BJ (cell line): ENCODE measurements at regions of chr20 and their contacts with region 1.

Region 1: DNA sequence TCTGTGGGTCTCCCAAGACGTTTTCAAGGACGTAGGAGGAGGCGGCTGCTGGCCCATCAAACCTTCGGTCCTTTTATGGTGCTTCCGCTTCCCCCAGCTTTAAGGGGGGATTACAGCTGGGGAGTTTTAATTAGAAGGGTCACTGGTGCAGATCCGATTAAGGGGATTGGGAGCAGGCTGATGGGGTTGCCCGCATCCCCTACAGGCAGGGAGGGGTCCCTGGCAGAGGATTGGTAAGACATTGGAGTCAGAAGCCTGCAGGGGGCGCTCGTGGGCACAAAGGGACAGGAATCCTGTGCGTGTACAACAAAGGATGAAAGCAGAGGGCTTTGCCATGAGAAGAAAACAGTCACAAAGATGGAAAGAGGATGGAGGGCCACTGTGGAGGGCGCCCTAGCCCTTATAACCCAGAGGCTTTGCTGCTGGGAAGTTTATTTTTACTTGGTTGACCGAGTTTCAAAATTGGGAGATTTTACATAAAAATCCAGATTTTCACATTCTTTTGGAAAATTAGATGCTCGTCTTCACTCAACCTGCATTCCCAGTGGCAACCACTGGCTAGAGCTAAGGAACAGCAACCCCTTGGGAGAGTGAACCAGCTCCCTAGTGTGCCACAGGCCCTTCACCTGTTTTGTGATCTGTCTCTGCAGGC is 97.9 kb downstream of the KCNB1 start:
- DNase-seq: no peak
- H3K4me3 ChIP-seq: no peak overlapping the region
- H3K27me3 ChIP-seq: peaks cover 3% of the 10 kb centered on the region; the same call in 1 of the 2 replicates
- CTCF ChIP-seq: peak; percentile 69

Region 2: GRCh38 chr20:49344975-49345374 is 39.6 kb before region 1 on chr20:
- CTCF ChIA-PET with region 1: interaction called, 10 read pairs
- POLR2A ChIA-PET with region 1: no interaction called
- DNase-seq: peak; percentile 92
- H3K4me3 ChIP-seq: peak overlapping the region; percentile 1; the same call in 1 of the 2 replicates
- H3K27me3 ChIP-seq: no peaks in the 10 kb centered on the region; the same call in 1 of the 2 replicates
- CTCF ChIP-seq: no peak

Region 3: DNA sequence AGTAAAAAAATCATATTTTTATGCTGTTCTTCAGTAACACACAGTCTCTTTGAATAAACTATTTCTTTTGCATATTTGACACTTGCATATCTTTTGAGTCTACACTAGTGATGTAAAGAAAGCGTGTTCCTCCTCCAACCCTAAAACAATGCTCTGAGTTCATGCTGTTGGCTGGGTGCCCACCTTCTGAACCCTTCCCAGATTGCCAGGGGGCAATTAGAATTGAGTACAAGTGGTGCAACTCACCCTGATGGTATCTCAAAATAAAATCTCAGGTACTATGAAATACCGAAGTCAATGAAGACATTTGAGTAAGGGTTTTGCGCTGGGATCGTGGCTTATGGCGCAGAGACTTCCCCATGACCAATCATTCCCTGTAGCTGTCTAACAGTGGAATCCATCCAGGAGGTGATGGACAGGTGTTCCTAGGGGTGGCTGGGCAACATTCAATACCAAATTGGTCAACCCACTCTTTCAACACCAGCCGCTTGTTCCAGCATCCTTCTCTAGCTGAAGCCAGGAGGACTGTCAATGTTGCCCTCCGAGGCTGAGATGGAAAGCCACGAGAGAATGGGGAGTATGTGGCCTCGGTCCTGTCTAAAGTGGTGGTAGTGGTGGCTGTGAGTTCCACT is 12.4 kb before region 1 on chr20:
- CTCF ChIA-PET with region 1: interaction called, 28 read pairs
- POLR2A ChIA-PET with region 1: no interaction called
- DNase-seq: no peak
- H3K4me3 ChIP-seq: no peak overlapping the region
- H3K27me3 ChIP-seq: peaks cover 10% of the 10 kb centered on the region
- CTCF ChIP-seq: no peak

Region 4: GRCh38 chr20:49397525-49397924 is 13.0 kb after region 1 on chr20:
- CTCF ChIA-PET with region 1: interaction called, 41 read pairs
- POLR2A ChIA-PET with region 1: no interaction called
- DNase-seq: peak; percentile 4
- H3K4me3 ChIP-seq: no peak overlapping the region
- H3K27me3 ChIP-seq: peaks cover 6% of the 10 kb centered on the region
- CTCF ChIP-seq: no peak